Dendritic cell treated with granulocyte-macrophage colony-stimulating factor and Interleukin-4, amounts not matched to agents 40 ng/mL and 50 ng/mL, for 4 days (primary cell): ENCODE measurements at regions of chr4 and their contacts with region 1.

Region 1: GRCh38 chr4:83369831-83370639 is 35.4 kb upstream of the HPSE start:
- H3K4me3 Mint-ChIP-seq: peak overlapping the region; percentile 20
- H3K27ac Mint-ChIP-seq: peak overlapping the region; percentile 48
- H3K4me1 Mint-ChIP-seq: peaks cover 45% of the 10 kb centered on the region
- H3K27me3 Mint-ChIP-seq: peaks cover 33% of the 10 kb centered on the region

Region 2: DNA sequence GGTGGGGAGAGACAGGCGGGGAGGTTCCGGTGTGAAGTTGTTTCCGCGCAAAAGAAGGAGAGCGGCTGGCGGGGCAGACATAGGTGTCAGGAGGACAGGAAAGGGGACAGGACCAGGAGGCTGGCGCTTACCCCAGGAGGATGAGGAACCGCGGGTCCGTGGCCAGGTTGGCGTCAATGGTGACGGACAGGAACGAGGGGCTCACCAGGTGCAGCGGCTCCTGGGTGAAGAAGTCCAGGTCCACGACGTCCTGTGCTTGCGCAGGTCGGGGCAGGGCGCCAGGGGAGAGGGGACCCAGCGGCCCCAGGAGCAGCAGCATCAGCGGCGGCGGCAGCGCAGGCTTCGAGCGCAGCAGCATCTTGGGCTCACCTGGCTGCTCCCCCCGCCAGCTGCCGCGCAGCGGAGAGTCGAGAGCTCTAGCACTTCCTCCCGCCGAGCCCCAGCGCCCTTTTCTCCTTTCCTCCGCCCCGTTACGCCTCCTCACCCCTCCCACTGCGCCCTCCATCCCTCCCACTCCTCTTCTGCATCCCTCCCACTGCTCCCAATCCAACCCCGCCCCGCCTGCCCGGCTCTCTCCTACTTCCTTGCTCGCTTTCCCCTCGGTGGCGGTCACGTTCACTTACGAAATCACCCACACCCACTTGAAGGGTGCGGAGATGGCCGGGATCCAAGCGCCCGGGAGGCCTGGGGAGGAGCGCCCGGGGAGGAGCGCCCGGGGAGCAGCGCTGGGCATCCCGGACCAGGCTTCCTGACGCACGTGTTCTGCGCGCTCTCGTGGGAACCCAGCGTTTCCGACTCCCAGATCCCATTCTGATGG is 35.4 kb before region 1 on chr4 and contains the start of gene HPSE:
- intact Hi-C with region 1: loop called (anchors 5 kb)
- H3K4me3 Mint-ChIP-seq: peak within 1 kb of the TSS; percentile 80
- H3K27ac Mint-ChIP-seq: peak within 1 kb of the TSS; percentile 67
- H3K4me1 Mint-ChIP-seq: peaks cover 46% of the 10 kb centered on the region
- H3K27me3 Mint-ChIP-seq: peaks cover 6% of the 10 kb centered on the region

Region 3: DNA sequence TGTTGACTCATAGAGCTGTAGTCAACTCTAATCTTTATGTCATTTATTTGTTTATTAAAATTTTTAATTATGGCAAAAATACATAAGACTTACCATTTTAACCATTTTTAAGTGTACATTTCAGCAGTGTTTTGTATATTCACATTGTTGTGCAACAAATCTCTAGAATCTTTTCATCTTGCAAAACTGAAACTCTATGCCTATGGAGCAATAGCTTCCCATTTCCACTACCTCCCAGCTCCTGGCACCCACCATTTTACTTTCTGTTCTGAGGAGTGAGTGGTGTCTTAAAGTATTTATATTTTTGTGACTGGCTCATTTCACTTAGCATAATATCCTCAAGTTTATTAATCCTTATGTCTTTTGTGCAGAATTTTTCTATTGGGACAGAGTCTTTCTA is 346.8 kb after region 1 on chr4:
- intact Hi-C with region 1: no loop called
- H3K4me3 Mint-ChIP-seq: no peak overlapping the region
- H3K27ac Mint-ChIP-seq: no peak overlapping the region
- H3K4me1 Mint-ChIP-seq: no peaks in the 10 kb centered on the region
- H3K27me3 Mint-ChIP-seq: peaks cover 4% of the 10 kb centered on the region